CD8-positive, alpha-beta T cell (primary cell): ENCODE measurements at regions of chr9 and their contacts with region 1.

Region 1: GRCh38 chr9:4679268-4680172 is at the start of gene CDC37L1:
- DNase-seq: peak; percentile 98 to 100 (median 99)
- ATAC-seq: peak; percentile 86
- H3K4me3 ChIP-seq: peak within 1 kb of the TSS; percentile 70 to 94
- H3K4me3 Mint-ChIP-seq: no peak within 1 kb of the TSS
- H3K27ac ChIP-seq: peak within 1 kb of the TSS; percentile 92 to 96
- H3K27ac Mint-ChIP-seq: no peak within 1 kb of the TSS
- H3K4me1 ChIP-seq: peaks cover 20% of the 10 kb centered on the region
- H3K4me1 Mint-ChIP-seq: peaks cover 12% of the 10 kb centered on the region
- H3K27me3 ChIP-seq: no peaks in the 10 kb centered on the region
- H3K27me3 Mint-ChIP-seq: no peaks in the 10 kb centered on the region
- CTCF ChIP-seq: peak; percentile 87
- total RNA-seq, gene CDC37L1: 35.1 to 36.1 TPM

Region 2: DNA sequence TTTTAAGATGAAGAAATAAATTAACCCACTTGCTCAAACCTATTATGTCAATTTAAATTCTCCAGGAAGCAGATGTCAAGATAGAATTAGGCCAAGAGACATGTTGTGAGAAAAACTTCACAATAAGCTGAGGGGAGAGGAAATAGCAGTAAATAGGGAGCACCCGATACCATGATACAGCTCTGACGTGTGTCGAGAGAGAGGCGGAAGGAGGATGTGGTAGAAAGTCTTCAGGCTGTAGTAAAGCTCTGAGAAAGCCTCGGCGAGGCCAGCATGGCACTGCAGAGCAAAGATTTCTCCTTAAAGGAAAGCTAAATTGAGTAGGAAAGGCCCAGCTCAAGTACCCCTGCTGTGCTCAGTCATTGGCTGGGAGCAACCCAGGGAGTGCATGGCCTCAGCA is 1829.6 kb before region 1 on chr9:
- CTCF ChIA-PET with region 1: no interaction called
- POLR2A ChIA-PET with region 1: no interaction called
- intact Hi-C with region 1: loop called in 1 of 2 experiments (anchors 10 kb)
- DNase-seq: peak in 2 of 9 experiments; percentile 11 to 42
- ATAC-seq: peak; percentile 59
- H3K4me3 ChIP-seq: no peak overlapping the region
- H3K4me3 Mint-ChIP-seq: no peak overlapping the region
- H3K27ac ChIP-seq: no peak overlapping the region
- H3K27ac Mint-ChIP-seq: no peak overlapping the region
- H3K4me1 ChIP-seq: peaks cover 8% of the 10 kb centered on the region
- H3K4me1 Mint-ChIP-seq: peaks cover 11% of the 10 kb centered on the region
- H3K27me3 ChIP-seq: no peaks in the 10 kb centered on the region
- H3K27me3 Mint-ChIP-seq: peaks cover 14% of the 10 kb centered on the region
- CTCF ChIP-seq: no peak

Region 3: DNA sequence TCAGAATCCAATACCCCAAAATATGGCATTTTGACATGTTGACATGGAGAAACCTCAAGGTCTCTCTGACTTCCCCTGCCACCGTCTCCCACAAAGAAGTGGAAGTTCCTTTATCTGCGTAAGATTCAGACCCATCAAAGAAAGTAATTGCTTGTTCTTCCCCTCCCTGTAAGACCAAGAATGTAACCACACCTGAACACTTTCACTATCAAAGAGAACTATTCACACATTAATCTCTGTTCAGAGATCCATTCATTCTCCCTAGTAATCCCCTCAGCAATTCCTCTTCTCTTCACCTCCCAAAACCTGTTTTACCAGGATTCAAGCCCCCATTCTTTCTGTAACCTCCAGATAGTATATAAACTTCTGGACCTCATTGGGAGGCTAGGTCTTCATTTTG is 193.3 kb before region 1 on chr9:
- CTCF ChIA-PET with region 1: no interaction called
- POLR2A ChIA-PET with region 1: no interaction called
- intact Hi-C with region 1: no loop called
- DNase-seq: peak in 1 of 9 experiments; percentile 32
- ATAC-seq: no peak
- H3K4me3 ChIP-seq: no peak overlapping the region
- H3K4me3 Mint-ChIP-seq: no peak overlapping the region
- H3K27ac ChIP-seq: no peak overlapping the region
- H3K27ac Mint-ChIP-seq: no peak overlapping the region
- H3K4me1 ChIP-seq: peaks cover 16% of the 10 kb centered on the region
- H3K4me1 Mint-ChIP-seq: peaks cover 21% of the 10 kb centered on the region
- H3K27me3 ChIP-seq: peaks cover 4 to 13% of the 10 kb centered on the region in 2 experiments
- H3K27me3 Mint-ChIP-seq: peaks cover 16% of the 10 kb centered on the region
- CTCF ChIP-seq: no peak

Region 4: DNA sequence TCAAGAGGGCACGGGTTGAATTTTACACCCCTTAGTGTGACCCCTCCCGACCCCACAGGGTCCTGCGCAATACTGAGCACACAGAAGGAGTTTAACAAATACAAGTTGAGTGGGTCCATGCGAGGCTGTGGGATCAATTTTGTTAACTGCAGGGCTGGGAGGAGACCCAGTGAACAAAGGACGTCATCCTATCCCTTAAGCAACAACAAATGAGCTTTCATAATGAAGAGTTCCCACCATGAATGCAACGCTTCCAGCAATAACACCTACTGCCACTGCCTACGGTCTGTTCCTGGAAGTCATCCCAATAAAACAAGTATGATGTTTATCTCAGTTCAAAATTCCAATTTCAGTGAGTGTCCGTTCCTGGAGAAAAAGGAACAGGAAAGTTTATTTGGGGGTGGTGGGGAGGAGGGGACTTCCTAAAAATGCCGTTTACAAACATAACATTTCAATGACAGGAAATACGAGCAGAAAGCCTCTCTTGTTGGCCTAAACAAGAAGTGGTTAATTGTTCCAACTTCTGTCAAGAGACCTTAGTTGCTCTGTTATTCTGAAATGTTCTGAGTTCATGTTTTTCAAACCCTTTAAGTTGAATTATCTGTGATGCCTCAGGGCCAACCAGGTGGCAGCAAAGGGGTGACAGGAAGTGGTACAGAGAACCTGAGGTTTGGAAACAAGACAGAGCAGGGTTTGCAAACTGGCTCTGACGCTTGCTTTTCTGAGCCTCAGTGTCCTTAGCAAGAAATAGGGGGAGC is 83.2 kb before region 1 on chr9:
- CTCF ChIA-PET with region 1: no interaction called
- POLR2A ChIA-PET with region 1: interaction called, 6 read pairs
- intact Hi-C with region 1: loop called (anchors 2 to 5 kb)
- DNase-seq: peak; percentile 21 to 87 (median 61)
- ATAC-seq: peak; percentile 90
- H3K4me3 ChIP-seq: no peak overlapping the region
- H3K4me3 Mint-ChIP-seq: peak overlapping the region; percentile 62
- H3K27ac ChIP-seq: peak overlapping the region; percentile 57 to 68
- H3K27ac Mint-ChIP-seq: peak overlapping the region; percentile 98
- H3K4me1 ChIP-seq: peaks cover 49% of the 10 kb centered on the region
- H3K4me1 Mint-ChIP-seq: peaks cover 61% of the 10 kb centered on the region
- H3K27me3 ChIP-seq: no peaks in the 10 kb centered on the region
- H3K27me3 Mint-ChIP-seq: no peaks in the 10 kb centered on the region
- CTCF ChIP-seq: peak; percentile 8

Region 5: DNA sequence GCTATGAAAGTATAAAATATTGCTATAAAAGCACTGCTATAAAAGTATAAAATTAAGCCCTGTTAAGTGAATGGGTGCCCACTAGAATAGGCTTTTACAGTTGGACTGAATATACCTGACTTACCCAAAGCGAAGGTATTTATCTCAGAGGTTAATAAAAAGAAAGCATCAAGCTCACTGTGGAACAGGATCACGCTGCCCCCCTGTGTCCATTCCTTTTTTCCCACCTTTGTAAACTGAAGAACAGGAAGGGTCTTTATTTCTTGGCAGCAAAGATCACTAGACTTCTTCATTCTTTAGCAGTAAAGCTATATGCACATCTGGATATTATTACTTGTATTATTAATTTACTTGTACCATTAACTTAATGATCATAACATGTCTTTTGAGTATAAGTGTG is 39.5 kb before region 1 on chr9:
- CTCF ChIA-PET with region 1: no interaction called
- POLR2A ChIA-PET with region 1: no interaction called
- intact Hi-C with region 1: loop called in 1 of 2 experiments (anchors 5 kb)
- DNase-seq: peak; percentile 15 to 75 (median 57)
- ATAC-seq: peak; percentile 71
- H3K4me3 ChIP-seq: no peak overlapping the region
- H3K4me3 Mint-ChIP-seq: no peak overlapping the region
- H3K27ac ChIP-seq: no peak overlapping the region
- H3K27ac Mint-ChIP-seq: no peak overlapping the region
- H3K4me1 ChIP-seq: no peaks in the 10 kb centered on the region
- H3K4me1 Mint-ChIP-seq: peaks cover 15% of the 10 kb centered on the region
- H3K27me3 ChIP-seq: no peaks in the 10 kb centered on the region
- H3K27me3 Mint-ChIP-seq: no peaks in the 10 kb centered on the region
- CTCF ChIP-seq: peak; percentile 70

Region 6: GRCh38 chr9:4667681-4668080 is 11.8 kb before region 1 on chr9:
- CTCF ChIA-PET with region 1: interaction called, 13 read pairs
- POLR2A ChIA-PET with region 1: interaction called, 31 read pairs
- intact Hi-C with region 1: loop called (anchors 1 kb)
- DNase-seq: peak in 3 of 9 experiments; percentile 33 to 59 (median 57)
- ATAC-seq: peak; percentile 66
- H3K4me3 ChIP-seq: no peak overlapping the region
- H3K4me3 Mint-ChIP-seq: peak overlapping the region; percentile 7
- H3K27ac ChIP-seq: no peak overlapping the region
- H3K27ac Mint-ChIP-seq: peak overlapping the region; percentile 85
- H3K4me1 ChIP-seq: peaks cover 63% of the 10 kb centered on the region
- H3K4me1 Mint-ChIP-seq: peaks cover 67% of the 10 kb centered on the region
- H3K27me3 ChIP-seq: no peaks in the 10 kb centered on the region
- H3K27me3 Mint-ChIP-seq: no peaks in the 10 kb centered on the region
- CTCF ChIP-seq: no peak

Region 7: DNA sequence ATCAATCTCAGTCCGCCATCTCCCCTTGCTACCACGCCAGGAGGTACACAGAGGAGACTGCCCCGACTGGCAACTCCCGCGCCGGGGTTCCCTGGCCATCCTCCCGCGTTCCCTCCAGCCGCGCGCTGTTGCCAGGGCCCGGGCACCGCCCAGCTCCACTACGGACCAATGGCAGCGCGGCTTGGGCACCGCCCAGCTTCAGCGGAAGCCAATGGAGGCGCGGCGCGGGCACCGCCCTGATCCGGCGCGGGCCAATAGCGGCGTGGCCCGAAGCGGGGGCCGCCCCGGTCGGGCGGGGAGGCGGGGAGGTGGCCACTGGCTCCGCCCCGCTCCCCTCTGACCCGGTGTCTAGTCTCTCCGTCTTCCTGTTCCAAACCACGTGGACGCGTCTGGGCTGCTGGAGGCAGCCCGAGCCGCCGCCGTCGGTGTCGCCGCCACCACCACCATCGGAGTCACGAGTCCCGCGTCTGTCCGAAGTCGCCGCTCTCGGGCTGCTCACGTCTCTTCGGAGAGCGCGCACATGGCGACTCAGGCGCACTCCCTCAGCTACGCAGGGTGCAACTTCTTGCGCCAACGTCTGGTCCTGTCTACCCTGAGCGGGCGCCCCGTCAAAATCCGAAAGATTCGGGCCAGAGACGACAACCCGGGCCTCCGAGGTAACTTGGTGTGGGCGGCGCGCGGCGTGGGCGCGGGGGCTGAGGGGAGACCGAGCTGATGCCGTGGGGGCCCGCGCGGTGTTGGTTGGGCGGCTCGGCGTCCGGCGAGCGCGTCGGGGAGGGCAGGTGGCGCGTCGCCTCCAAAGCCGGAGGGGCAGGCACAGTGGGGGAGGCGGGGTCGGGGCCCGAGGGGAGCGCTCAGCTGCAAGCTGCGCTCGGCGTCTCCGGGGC is 113.3 kb after region 1 on chr9 and contains the start of gene RCL1:
- CTCF ChIA-PET with region 1: interaction called, 3 read pairs
- POLR2A ChIA-PET with region 1: interaction called, 7 read pairs
- intact Hi-C with region 1: loop called (anchors 1 to 5 kb)
- DNase-seq: peak; percentile 92 to 98 (median 95)
- ATAC-seq: peak; percentile 90
- H3K4me3 ChIP-seq: peak within 1 kb of the TSS; percentile 92 to 98
- H3K4me3 Mint-ChIP-seq: peak within 1 kb of the TSS; percentile 95
- H3K27ac ChIP-seq: peak within 1 kb of the TSS; percentile 90 to 92
- H3K27ac Mint-ChIP-seq: peak within 1 kb of the TSS; percentile 96
- H3K4me1 ChIP-seq: peaks cover 30% of the 10 kb centered on the region
- H3K4me1 Mint-ChIP-seq: peaks cover 47% of the 10 kb centered on the region
- H3K27me3 ChIP-seq: no peaks in the 10 kb centered on the region
- H3K27me3 Mint-ChIP-seq: no peaks in the 10 kb centered on the region
- CTCF ChIP-seq: no peak
- total RNA-seq, gene RCL1: 30.8 to 35.0 TPM

Region 8: GRCh38 chr9:5002811-5003210 is 323.3 kb after region 1 on chr9:
- CTCF ChIA-PET with region 1: no interaction called
- POLR2A ChIA-PET with region 1: no interaction called
- intact Hi-C with region 1: no loop called
- DNase-seq: no peak
- ATAC-seq: no peak
- H3K4me3 ChIP-seq: no peak overlapping the region
- H3K4me3 Mint-ChIP-seq: no peak overlapping the region
- H3K27ac ChIP-seq: no peak overlapping the region
- H3K27ac Mint-ChIP-seq: no peak overlapping the region
- H3K4me1 ChIP-seq: no peaks in the 10 kb centered on the region
- H3K4me1 Mint-ChIP-seq: peaks cover 5% of the 10 kb centered on the region
- H3K27me3 ChIP-seq: no peaks in the 10 kb centered on the region
- H3K27me3 Mint-ChIP-seq: no peaks in the 10 kb centered on the region
- CTCF ChIP-seq: no peak

Region 9: DNA sequence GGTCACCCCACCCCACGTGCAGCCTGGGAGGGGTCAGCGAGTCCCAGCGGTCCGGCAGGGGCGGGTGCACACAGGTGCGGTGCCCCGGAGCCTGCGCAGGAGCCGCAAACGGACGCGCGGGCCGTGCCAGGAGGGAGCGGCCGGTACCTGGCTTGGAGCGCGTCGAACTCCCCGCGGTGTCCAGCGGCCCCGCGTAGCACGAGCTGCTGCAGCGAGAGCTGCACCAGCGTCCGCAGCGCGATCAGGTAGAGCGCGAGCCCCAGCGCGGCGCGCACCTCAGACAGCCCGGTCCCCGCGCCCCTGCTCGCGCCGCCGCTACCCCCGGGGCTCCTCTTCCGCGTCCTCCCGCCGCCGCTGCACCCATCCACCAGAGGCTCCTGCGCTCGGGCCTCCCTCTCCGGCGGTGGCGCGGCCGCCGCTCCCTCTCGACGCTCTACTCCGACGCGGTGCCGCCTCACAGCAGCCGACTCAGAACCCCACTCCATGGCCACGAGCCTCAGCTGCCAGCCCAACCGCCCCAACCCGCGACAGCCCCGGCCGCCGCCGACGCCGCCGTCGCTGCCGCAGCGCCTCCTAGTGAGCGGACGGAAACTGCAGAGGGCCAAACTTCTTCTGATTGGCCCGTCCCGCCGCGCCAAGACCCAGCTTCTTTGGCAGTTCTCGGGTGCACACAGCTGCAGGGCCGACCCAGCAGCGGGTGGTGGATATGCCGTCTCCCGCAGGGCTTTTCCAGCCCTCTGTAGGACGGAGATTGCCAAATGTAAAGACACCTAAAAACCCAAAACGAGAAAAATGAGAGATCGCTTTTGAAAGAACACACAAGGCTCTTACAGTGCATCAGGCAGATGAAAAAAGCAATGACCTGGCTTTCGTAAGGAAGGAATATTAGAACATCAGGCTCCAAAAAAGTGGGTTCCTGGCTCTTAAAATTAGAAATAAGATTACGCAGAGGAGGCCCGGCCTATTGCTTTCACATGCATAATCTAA is 1153.3 kb after region 1 on chr9 and contains the start of gene ERMP1:
- CTCF ChIA-PET with region 1: no interaction called
- POLR2A ChIA-PET with region 1: no interaction called
- intact Hi-C with region 1: loop called in 1 of 2 experiments (anchors 5 kb)
- DNase-seq: peak; percentile 85 to 95 (median 92)
- ATAC-seq: peak; percentile 87
- H3K4me3 ChIP-seq: peak within 1 kb of the TSS; percentile 57 to 91
- H3K4me3 Mint-ChIP-seq: peak within 1 kb of the TSS; percentile 96
- H3K27ac ChIP-seq: peak within 1 kb of the TSS in 1 of 2 experiments; percentile 41
- H3K27ac Mint-ChIP-seq: peak within 1 kb of the TSS; percentile 88
- H3K4me1 ChIP-seq: peaks cover 34% of the 10 kb centered on the region
- H3K4me1 Mint-ChIP-seq: peaks cover 66% of the 10 kb centered on the region
- H3K27me3 ChIP-seq: no peaks in the 10 kb centered on the region
- H3K27me3 Mint-ChIP-seq: no peaks in the 10 kb centered on the region
- CTCF ChIP-seq: peak; percentile 83
- total RNA-seq, gene ERMP1: 5.2 to 7.9 TPM